ENCODE measurements at regions of chr2 and their contacts with region 1.

Region 1: GRCh38 chr2:33210626-33211025 is 263.9 kb downstream of the LTBP1 start:
- DNase-seq: peak; percentile 93
- H3K4me3 ChIP-seq: no peak overlapping the region
- H3K27ac ChIP-seq: peak overlapping the region; percentile 84
- H3K4me1 ChIP-seq: peaks cover 45% of the 10 kb centered on the region
- H3K27me3 ChIP-seq: no peaks in the 10 kb centered on the region
- CTCF ChIP-seq: no peak

Region 2: GRCh38 chr2:32963941-32964340 is 246.7 kb before region 1 on chr2:
- CTCF ChIA-PET with region 1: no interaction called
- dilution Hi-C with region 1: no loop called
- in situ Hi-C with region 1: no loop called
- intact Hi-C with region 1: no loop called
- DNase-seq: no peak
- H3K4me3 ChIP-seq: no peak overlapping the region
- H3K27ac ChIP-seq: no peak overlapping the region
- H3K4me1 ChIP-seq: no peaks in the 10 kb centered on the region
- H3K27me3 ChIP-seq: no peaks in the 10 kb centered on the region
- CTCF ChIP-seq: no peak

Region 3: GRCh38 chr2:33069894-33070651 is 140.6 kb before region 1 on chr2:
- CTCF ChIA-PET with region 1: no interaction called
- dilution Hi-C with region 1: no loop called
- in situ Hi-C with region 1: no loop called
- intact Hi-C with region 1: loop called (anchors 5 kb)
- DNase-seq: peak; percentile 98
- H3K4me3 ChIP-seq: peak overlapping the region; percentile 18 to 37 (median 21)
- H3K27ac ChIP-seq: peak overlapping the region; percentile 99
- H3K4me1 ChIP-seq: peaks cover 43% of the 10 kb centered on the region
- H3K27me3 ChIP-seq: no peaks in the 10 kb centered on the region
- CTCF ChIP-seq: no peak

Region 4: GRCh38 chr2:33134086-33134771 is 76.4 kb before region 1 on chr2:
- CTCF ChIA-PET with region 1: no interaction called
- dilution Hi-C with region 1: no loop called
- in situ Hi-C with region 1: no loop called
- intact Hi-C with region 1: loop called (anchors 5 kb)
- DNase-seq: peak; percentile 96
- H3K4me3 ChIP-seq: peak overlapping the region; percentile 4 to 28 (median 14)
- H3K27ac ChIP-seq: peak overlapping the region; percentile 9
- H3K4me1 ChIP-seq: peaks cover 37% of the 10 kb centered on the region
- H3K27me3 ChIP-seq: no peaks in the 10 kb centered on the region
- CTCF ChIP-seq: peak; percentile 15 to 18